K562 (cell line): ENCODE measurements at regions of chr15 and their contacts with region 1.

Region 1: GRCh38 chr15:51888593-51889195 is 59.2 kb downstream of the TMOD3 start:
- DNase-seq: peak; percentile 22 to 44 (median 32)
- ATAC-seq: peak; percentile 78
- H3K4me3 ChIP-seq: no peak overlapping the region
- H3K27ac ChIP-seq: no peak overlapping the region
- H3K4me1 ChIP-seq: no peaks in the 10 kb centered on the region; a peak in 2 of 5 replicates
- H3K27me3 ChIP-seq: no peaks in the 10 kb centered on the region
- CTCF ChIP-seq: peak in 2 of 3 experiments; percentile 61 to 79; a peak in 5 of 6 replicates
- EP300 ChIP-seq: no peak
- POLR2A ChIP-seq: no peak
- RAD21 ChIP-seq: peak; percentile 32 to 67; a peak in 3 of 4 replicates

Region 2: GRCh38 chr15:51907136-51907914 is 18.6 kb after region 1 on chr15:
- CTCF ChIA-PET with region 1: no interaction called
- POLR2A ChIA-PET with region 1: interaction called, 11 read pairs
- in situ Hi-C with region 1: no loop called
- intact Hi-C with region 1: no loop called
- DNase-seq: peak; percentile 19 to 46 (median 26)
- ATAC-seq: peak; percentile 82
- H3K4me3 ChIP-seq: no peak overlapping the region
- H3K27ac ChIP-seq: no peak overlapping the region
- H3K4me1 ChIP-seq: no peaks in the 10 kb centered on the region; a peak in 1 of 5 replicates
- H3K27me3 ChIP-seq: no peaks in the 10 kb centered on the region
- CTCF ChIP-seq: peak; percentile 27 to 42 (median 32); a peak in 2 of 6 replicates
- EP300 ChIP-seq: no peak
- POLR2A ChIP-seq: no peak
- RAD21 ChIP-seq: peak in 1 of 2 experiments; percentile 23; a peak in 1 of 4 replicates